ENCODE measurements at regions of chr17 and their contacts with region 1.

Region 1: GRCh38 chr17:61352781-61353491 is 46.7 kb upstream of the TBX2 start:
- DNase-seq: no peak
- H3K4me3 Mint-ChIP-seq: no peak overlapping the region
- H3K27ac Mint-ChIP-seq: no peak overlapping the region
- H3K4me1 Mint-ChIP-seq: no peaks in the 10 kb centered on the region
- H3K27me3 Mint-ChIP-seq: no peaks in the 10 kb centered on the region

Region 2: DNA sequence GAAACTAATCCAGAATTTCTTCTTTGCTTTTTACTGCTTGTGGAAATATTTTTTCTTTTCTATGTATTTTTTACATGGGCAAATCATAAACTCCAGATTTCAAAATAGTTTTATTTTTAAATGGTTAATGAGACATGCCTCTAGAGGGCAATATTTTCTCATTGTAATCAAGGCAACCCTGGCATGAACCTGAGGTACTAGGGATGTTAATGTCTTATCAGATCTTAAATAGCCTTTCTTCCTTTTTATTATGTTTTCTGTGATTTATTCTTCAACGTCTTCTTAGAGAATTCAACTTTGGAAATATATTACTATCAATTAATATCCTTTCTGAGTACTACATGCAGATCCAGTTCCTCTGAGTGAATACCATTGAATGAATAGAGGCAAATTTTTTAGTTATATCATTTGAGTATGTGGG is 350.6 kb before region 1 on chr17:
- intact Hi-C with region 1: loop called (anchors 10 kb)
- DNase-seq: no peak
- H3K4me3 Mint-ChIP-seq: no peak overlapping the region
- H3K27ac Mint-ChIP-seq: no peak overlapping the region
- H3K4me1 Mint-ChIP-seq: no peaks in the 10 kb centered on the region
- H3K27me3 Mint-ChIP-seq: peaks cover 11% of the 10 kb centered on the region

Region 3: DNA sequence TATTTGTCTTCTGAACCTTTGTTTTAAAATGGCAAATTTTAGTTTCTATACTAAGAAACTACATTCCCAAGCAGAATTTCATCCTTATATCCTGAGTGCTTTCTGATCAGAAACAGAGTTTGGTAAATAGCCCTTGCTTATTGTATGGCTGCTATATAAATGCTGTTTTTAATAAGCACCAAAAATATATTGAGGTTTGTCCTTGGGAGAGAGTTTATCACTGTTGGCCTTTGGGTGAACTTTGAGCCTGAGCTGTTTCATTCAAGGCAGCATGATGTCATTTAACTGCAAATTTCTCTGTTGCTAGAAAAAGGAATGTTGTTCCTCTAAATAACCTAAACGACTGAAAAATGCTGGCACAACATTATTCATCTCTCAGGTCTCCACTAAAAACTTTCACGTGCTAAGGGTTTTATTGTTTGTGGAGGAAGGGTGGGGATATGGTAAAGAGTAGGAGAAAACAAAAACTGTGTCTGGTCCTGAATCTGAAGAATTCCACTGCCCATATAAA is 287.6 kb before region 1 on chr17:
- intact Hi-C with region 1: no loop called
- DNase-seq: no peak
- H3K4me3 Mint-ChIP-seq: peak overlapping the region; percentile 38
- H3K27ac Mint-ChIP-seq: peak overlapping the region; percentile 55
- H3K4me1 Mint-ChIP-seq: peaks cover 15% of the 10 kb centered on the region
- H3K27me3 Mint-ChIP-seq: no peaks in the 10 kb centered on the region

Region 4: GRCh38 chr17:61338000-61338798 is 14.7 kb before region 1 on chr17:
- intact Hi-C with region 1: no loop called
- DNase-seq: no peak
- H3K4me3 Mint-ChIP-seq: no peak overlapping the region
- H3K27ac Mint-ChIP-seq: no peak overlapping the region
- H3K4me1 Mint-ChIP-seq: no peaks in the 10 kb centered on the region
- H3K27me3 Mint-ChIP-seq: no peaks in the 10 kb centered on the region

Region 5: DNA sequence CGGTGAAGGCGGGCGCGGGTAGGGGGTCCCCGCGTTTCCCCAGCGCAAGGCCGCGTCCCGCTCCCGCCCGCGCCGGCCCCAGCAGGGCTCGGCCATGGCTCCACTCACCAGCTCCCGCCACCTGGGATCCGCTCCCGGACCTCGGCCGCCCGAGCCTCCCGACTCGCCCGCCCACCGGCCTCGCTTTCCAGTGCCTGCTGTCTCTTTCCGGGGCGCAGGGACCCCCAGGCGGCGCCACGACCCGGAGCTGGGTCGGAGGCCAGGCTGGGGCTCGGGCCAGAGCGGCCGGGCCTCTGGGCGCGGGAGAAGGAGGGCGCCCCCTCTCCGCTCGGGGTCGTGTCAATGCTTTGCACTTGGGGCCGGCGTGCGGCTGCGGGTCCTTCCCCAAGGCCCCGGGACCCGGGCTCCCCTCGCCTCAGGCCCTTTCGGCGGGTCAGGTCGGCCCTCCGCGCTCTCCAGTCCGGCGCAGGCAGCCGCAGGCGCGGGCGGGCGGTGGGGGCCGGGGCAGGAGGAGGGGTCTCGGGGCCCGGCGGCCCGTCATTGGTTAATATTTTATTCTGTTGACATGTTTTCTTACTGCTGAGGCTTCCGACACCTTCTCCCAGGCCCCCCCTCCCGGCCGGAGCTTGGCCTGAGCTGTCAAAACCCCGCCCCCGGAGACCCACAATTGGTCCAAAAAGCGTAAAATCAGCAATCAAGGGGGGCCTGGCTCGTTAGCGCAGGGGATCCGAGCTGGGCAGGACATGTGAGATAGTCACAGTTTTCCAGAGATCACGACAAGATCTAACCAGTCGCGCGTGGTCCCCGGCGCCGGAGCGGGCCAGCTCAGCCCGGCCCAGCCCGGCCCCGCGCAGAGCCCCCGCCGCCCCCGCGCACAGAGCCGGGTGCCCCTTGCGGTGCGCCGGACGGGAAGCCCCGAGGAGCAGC is 46.5 kb after region 1 on chr17 and contains the start of gene TBX2:
- intact Hi-C with region 1: no loop called
- DNase-seq: no peak
- H3K4me3 Mint-ChIP-seq: peak within 1 kb of the TSS; percentile 49
- H3K27ac Mint-ChIP-seq: peak within 1 kb of the TSS; percentile 55
- H3K4me1 Mint-ChIP-seq: peaks cover 12% of the 10 kb centered on the region
- H3K27me3 Mint-ChIP-seq: peaks cover 65% of the 10 kb centered on the region
- total RNA-seq, gene TBX2: 0.14 and 0.21 TPM in 2 replicates

Measured in activated T-helper 2 cell treated with anti-CD3 and anti-CD28 coated beads, Interferon-gamma antibody, Interleukin-2, Interleukin-4, amounts not matched to agents 10 μg/mL and 5 μg/mL and 100 μg/mL, durations not matched to agents 14 hours and 24 hours and 36 hours (primary cell).